Tibial artery (tissue), 4 donors: ENCODE measurements at regions of chr2 and their contacts with region 1.

Region 1: GRCh38 chr2:20135631-20136050 is 84.2 kb upstream of the LAPTM4A start:
- DNase-seq: peak; percentile 42 to 73
- H3K4me3 ChIP-seq: no peak overlapping the region
- H3K27ac ChIP-seq: no peak overlapping the region
- H3K4me1 ChIP-seq: no peaks in the 10 kb centered on the region
- H3K27me3 ChIP-seq: peaks cover 0 to 28% of the 10 kb centered on the region in 2 donors
- CTCF ChIP-seq: peak; percentile 52 to 61

Region 2: GRCh38 chr2:20012299-20013125 is 123.1 kb before region 1 on chr2 and contains the start of gene MATN3:
- intact Hi-C with region 1: no loop called
- DNase-seq: no peak
- H3K4me3 ChIP-seq: peak within 1 kb of the TSS; percentile 56 to 68
- H3K27ac ChIP-seq: peak within 1 kb of the TSS; percentile 67 to 77
- H3K4me1 ChIP-seq: peaks cover 0 to 14% (median 12%) of the 10 kb centered on the region in 4 donors
- H3K27me3 ChIP-seq: no peaks in the 10 kb centered on the region
- CTCF ChIP-seq: no peak

Region 3: GRCh38 chr2:20097879-20098714 is 37.5 kb before region 1 on chr2:
- intact Hi-C with region 1: no loop called
- DNase-seq: peak; percentile 75 to 88
- H3K4me3 ChIP-seq: no peak overlapping the region
- H3K27ac ChIP-seq: no peak overlapping the region
- H3K4me1 ChIP-seq: peaks cover 0 to 3% (median 0%) of the 10 kb centered on the region in 4 donors
- H3K27me3 ChIP-seq: peaks cover 0 to 6% of the 10 kb centered on the region in 2 donors
- CTCF ChIP-seq: peak; percentile 84 to 89

Region 4: DNA sequence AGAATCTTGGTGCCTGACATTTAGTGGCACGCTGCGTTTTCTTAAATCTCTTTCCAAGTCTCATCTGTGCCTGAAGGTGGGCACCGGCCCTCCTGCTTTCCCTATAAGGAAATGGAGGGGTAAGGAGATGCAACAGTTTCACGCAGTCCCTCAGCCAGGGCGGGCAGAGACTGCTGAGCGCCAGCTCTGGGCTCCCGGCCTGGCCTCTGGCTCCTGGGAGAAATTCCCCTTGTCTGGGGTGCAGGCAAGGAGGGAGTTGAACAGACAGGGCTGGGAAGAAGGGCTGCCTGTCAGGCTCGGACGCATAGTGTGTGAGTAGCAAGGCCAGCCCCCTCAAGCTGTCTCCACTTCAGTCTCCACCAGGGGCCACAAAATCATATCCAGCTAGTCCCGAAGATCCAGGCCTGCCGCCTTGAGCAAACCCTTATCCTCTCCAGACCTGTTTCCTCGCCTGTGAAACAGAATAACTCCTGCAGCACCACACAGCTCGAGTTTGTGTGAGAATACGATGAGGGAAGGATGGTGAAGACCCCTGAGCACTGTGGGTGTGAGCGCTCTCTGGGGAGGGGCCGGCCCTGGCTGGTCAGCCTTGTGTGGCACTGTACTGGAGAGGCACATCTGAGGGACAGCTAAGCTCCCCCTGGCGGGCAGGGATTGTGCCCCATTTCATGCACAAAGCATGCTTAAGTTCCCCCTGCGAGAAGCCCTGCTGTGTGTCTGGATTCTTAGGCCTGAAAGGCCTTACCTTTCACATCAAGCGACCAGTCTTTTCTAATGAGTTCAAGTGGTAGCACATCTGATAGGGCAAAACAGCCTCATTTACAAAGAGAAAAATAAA is 55.5 kb after region 1 on chr2:
- intact Hi-C with region 1: no loop called
- DNase-seq: no peak
- H3K4me3 ChIP-seq: no peak overlapping the region
- H3K27ac ChIP-seq: no peak overlapping the region
- H3K4me1 ChIP-seq: peaks cover 0 to 4% (median 0%) of the 10 kb centered on the region in 4 donors
- H3K27me3 ChIP-seq: peaks cover 0 to 5% of the 10 kb centered on the region in 2 donors
- CTCF ChIP-seq: no peak

Region 5: GRCh38 chr2:20225294-20226151 is 89.9 kb after region 1 on chr2:
- intact Hi-C with region 1: loop called (anchors 10 kb)
- DNase-seq: peak; percentile 21 to 54
- H3K4me3 ChIP-seq: peak overlapping the region; percentile 50 to 64
- H3K27ac ChIP-seq: no peak overlapping the region
- H3K4me1 ChIP-seq: peaks cover 0 to 37% (median 24%) of the 10 kb centered on the region in 4 donors
- H3K27me3 ChIP-seq: peaks cover 0 to 47% of the 10 kb centered on the region in 2 donors
- CTCF ChIP-seq: peak in 1 of 2 experiments; percentile 39